PC-3 (cell line): ENCODE measurements at regions of chr3 and their contacts with region 1.

Region 1: GRCh38 chr3:128487813-128488635 is 5.0 kb downstream of the GATA2 start:
- DNase-seq: peak; percentile 83
- ATAC-seq: peak; percentile 60
- H3K4me3 ChIP-seq: peak overlapping the region; percentile 93
- H3K27ac ChIP-seq: peak overlapping the region; percentile 60
- H3K4me1 ChIP-seq: peaks cover 34% of the 10 kb centered on the region
- H3K27me3 ChIP-seq: no peaks in the 10 kb centered on the region
- CTCF ChIP-seq: no peak

Region 2: DNA sequence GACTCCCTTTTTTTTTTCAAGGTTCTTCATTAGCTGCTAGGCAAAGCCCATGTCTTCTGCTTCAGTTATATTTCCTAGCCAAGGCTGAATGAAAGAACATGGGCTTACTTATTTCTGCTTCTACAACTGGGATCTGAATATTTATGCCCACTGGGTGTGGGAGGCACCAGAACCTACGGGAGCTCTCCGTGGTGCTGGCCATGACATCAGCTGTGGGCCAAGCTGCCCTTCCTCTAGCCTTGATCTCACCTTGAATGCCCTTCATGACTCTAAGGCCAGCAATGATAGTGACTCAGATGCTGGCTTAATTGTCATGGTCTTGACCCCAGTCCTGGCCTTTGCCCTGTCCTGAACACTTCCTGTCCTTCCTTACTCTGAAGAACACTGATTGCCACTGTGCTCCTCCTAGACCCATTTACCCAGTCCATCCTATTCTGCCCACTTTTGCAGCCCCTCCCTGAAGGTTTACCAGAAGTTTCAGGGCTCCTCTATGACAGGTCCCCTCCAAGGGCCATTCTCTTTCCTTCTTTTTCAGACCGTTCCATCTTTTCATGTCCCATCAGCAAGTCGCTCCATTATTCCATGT is 1167.4 kb before region 1 on chr3:
- CTCF ChIA-PET with region 1: no interaction called
- POLR2A ChIA-PET with region 1: no interaction called
- intact Hi-C with region 1: no loop called
- DNase-seq: peak; percentile 10
- ATAC-seq: no peak
- H3K4me3 ChIP-seq: no peak overlapping the region
- H3K27ac ChIP-seq: no peak overlapping the region
- H3K4me1 ChIP-seq: no peaks in the 10 kb centered on the region
- H3K27me3 ChIP-seq: peaks cover 43% of the 10 kb centered on the region
- CTCF ChIP-seq: no peak

Region 3: DNA sequence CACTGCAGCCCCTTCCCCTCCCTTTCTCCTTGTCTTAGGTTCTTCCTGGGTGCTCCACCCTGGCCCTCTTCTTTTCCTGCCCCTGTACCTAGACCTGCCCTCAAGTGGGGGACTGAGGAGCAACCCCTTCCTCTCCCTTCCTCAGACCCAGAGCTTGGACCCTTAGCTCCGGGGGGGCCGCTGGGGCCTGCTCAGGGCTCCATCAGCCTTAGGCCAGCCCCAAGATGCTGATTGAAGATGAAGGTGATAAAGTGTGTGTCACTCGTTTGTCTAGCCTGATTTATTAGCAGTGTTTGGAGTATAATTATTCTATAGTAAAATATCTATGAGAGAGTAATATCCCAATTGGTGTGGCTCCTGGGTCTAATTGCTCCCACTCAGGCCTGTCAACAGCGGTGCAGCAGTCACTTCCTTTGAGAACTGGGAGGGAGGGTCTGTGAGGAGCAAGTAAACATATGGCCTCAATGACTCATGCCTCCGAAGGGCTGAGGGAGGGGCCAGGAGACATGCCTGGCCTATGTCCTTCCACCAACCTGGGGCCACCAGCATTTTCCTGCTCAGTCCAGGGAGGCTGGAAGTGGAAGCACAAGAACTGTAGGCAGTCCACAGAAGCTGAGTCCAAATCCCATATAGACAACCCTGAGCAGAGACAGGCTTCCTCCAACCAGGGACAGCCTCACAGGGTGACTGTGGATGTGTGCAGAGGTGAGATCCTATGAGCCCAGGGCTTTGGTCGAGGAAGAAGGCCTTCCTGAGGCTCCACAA is 144.6 kb before region 1 on chr3:
- CTCF ChIA-PET with region 1: no interaction called
- POLR2A ChIA-PET with region 1: no interaction called
- intact Hi-C with region 1: no loop called
- DNase-seq: peak; percentile 78
- ATAC-seq: peak; percentile 96
- H3K4me3 ChIP-seq: no peak overlapping the region
- H3K27ac ChIP-seq: peak overlapping the region; percentile 25
- H3K4me1 ChIP-seq: peaks cover 13% of the 10 kb centered on the region
- H3K27me3 ChIP-seq: no peaks in the 10 kb centered on the region
- CTCF ChIP-seq: no peak

Region 4: DNA sequence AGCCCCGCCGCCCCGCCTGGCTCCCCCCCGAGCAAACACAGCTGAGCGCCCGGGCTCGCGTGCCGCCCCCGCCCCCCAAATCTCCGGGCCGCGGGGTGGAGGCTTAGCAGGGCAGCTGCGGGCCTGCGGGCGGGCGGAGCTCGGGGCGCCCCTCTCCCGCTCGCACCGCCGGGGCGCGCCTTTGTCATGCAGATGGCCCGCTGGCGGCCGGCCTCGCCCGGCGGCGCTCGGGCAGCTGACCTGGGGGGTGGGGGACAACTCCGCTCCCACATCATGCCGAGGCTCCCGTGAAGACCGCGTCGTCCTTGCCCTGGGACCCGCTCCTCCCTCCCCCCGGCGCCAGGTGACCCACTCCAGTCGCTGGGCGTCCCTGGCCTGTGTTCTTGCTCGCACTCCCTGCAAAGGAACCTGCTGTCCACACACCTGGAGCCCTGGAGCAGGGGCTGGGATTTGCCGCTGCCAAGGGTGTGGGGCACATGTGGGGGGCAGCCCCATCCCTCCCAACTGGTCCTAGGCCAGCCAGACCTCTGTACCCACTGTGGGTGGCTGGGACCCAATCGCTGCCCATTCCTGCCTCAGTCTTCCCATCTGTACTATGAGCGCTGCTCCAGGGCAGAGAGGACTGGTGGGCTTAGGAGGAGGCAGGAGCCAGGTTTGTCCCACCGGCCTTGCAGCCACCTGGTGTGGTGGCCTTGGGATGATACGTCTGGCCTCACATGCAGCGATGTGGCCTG is 54.9 kb before region 1 on chr3:
- CTCF ChIA-PET with region 1: no interaction called
- POLR2A ChIA-PET with region 1: no interaction called
- intact Hi-C with region 1: loop called (anchors 2 kb)
- DNase-seq: peak; percentile 9
- ATAC-seq: peak; percentile 10
- H3K4me3 ChIP-seq: peak overlapping the region; percentile 70
- H3K27ac ChIP-seq: peak overlapping the region; percentile 30
- H3K4me1 ChIP-seq: peaks cover 42% of the 10 kb centered on the region
- H3K27me3 ChIP-seq: no peaks in the 10 kb centered on the region
- CTCF ChIP-seq: no peak

Region 5: DNA sequence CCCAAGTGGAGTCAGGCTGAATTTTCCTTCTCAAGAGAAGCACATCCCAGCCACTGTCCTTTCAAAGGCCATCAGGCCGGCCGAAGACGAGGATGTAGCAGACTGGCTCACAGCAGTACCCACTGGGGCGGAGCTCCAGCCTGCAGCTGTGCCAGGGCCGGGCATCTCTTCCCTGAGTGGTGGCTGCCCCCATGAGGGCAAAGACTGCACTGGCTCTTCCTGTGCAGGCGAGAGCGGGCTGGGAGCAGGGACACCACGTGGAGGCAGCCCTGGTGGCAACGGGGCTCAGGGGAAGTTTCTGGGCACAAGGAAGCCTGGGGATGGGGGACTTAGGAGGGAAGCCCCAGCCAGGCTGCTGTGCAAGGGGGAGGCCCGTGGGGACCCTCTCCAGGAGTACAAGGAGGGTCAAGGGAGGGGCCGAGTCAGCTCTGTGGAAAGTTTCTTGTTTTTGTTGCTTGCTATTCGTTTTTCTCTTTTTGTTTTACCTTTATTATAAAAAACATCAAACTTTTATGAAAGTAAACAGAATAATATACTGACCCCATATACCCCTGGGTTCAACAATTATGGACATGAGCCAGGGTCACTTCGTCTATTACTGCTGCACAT is 96.5 kb after region 1 on chr3:
- CTCF ChIA-PET with region 1: no interaction called
- POLR2A ChIA-PET with region 1: no interaction called
- intact Hi-C with region 1: no loop called
- DNase-seq: peak; percentile 85
- ATAC-seq: peak; percentile 100
- H3K4me3 ChIP-seq: no peak overlapping the region
- H3K27ac ChIP-seq: no peak overlapping the region
- H3K4me1 ChIP-seq: peaks cover 7% of the 10 kb centered on the region; the same call in 1 of the 2 replicates
- H3K27me3 ChIP-seq: no peaks in the 10 kb centered on the region
- CTCF ChIP-seq: peak; percentile 84